ENCODE measurements at regions of chr10 and their contacts with region 1.

Region 1: GRCh38 chr10:69004821-69005220 is 16.2 kb downstream of the KIFBP start:
- DNase-seq: peak; percentile 39
- CTCF ChIP-seq: peak; percentile 52

Region 2: DNA sequence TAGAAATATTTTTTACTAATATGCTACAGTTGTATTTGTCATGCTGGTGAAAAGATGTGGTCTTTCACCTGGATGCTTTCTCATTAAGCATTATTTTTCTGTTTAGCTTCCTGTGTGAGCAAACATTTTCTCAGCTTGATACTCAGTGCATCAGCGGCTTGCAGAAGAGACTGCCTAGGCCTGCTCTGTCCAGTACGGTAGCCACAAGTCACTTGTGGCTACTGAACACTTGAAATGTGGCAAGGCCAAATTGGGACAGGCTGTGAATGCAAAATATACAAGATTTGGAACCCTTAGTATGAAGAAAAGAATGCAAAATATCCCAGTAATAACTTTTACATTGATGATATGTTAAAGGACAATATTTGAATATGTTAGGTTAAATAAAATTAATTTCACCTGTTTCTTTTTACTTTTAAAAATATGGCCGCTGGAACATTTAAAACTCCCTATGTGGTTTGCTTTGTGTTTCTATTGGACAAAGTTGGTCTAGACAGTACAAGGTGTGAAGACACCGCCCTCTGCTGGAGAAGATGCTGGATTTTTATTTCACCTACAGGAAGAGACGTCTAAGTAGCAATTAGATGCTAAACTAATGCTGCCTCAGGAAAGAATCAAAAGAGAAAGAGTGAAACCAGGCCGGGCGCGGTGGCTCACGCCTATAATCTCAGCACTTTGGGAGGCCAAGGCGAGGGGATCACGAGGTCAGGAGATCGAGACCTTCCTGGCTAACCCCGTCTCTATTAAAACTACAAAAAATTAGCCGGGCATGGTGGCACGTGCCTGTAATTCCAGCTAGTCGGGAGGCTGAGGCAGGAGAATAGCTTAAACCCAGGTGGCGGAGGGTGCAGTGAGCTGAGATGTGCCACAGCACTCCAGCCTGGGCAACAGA is 88.4 kb after region 1 on chr10:
- in situ Hi-C with region 1: loop called (anchors 5 kb)
- DNase-seq: peak; percentile 59
- CTCF ChIP-seq: peak; percentile 62

Region 3: DNA sequence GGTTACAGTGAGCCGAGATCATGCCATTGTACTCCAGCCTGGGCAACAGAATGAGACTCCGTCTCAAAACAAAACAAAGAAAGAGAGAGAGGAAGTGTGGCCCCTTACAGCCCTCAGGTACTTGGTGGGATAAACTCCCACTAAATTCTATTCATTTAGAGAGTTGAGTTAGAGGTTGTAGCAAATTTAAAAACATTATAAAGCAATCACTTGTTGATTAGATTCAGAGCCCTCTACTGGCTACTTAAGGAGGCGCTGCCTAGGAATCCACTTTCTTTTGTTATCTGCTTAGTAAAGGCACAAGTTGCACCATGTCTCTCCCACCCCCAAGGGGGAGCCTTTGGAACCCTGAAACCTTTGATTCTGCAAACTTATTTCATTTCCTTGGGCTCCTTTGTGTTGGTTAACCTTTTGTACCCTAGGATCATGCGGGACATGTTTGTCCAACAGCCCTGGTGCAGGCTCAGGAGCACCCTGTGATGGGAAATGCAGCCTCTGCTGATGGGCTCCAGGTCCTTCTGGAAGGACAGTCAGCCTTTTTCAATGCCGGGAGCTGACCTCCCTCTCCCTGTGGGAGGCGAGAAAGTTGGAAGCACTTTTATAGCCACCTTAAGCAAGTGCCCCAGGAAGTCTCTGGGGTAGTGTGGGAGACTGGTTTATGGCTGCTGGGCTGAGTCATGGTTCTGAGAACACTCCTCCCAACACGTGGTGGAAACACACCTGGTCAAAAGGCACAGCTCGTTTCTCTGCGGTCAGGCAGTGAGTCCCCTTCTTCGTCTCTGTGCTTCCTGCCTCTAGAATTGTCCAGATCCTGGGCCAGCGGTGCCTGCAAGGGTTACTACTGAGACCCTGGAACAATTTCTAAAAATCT is 217.6 kb after region 1 on chr10:
- in situ Hi-C with region 1: loop called (anchors 25 kb)
- DNase-seq: peak; percentile 81
- CTCF ChIP-seq: peak; percentile 60

Region 4: GRCh38 chr10:69364232-69364940 is 359.6 kb after region 1 on chr10:
- in situ Hi-C with region 1: no loop called
- DNase-seq: no peak
- CTCF ChIP-seq: peak; percentile 2